ENCODE measurements at regions of chr6 and their contacts with region 1.

Region 1: DNA sequence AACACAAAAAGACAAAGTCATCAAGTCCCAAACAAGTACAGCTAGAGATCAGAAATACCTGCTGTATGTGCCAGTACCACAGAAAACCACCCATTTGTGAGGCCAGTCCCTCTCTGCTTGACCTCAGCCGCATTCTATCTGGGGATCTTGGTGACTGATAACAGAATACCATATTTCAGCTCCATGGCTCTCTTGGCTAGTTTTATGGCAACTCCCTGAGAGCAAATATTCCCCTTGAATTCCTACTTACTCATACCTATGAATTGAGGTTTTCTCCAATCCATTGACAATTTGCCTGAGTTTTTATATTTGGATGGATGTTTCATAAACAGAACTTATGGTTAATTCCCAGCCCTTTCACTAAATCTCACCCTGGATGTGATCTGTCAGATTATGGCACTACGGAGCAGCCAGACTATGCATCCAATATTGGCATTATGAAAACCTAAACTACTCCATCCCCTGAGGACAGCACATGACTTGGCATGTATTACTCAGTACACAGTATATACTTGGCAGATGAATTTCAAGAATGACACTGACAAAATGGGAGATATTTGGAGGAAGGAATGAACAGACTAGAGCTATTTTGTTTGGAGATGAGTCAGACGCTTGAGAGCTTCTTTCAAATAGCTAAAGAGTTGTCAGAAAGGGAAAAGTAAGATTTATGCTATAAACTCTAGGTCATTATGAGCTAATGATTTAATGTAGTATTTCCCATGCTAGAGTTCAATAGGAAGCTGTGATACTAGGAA is 95.7 kb downstream of the PRDM1 start:
- DNase-seq: no peak
- CTCF ChIP-seq: no peak

Region 2: DNA sequence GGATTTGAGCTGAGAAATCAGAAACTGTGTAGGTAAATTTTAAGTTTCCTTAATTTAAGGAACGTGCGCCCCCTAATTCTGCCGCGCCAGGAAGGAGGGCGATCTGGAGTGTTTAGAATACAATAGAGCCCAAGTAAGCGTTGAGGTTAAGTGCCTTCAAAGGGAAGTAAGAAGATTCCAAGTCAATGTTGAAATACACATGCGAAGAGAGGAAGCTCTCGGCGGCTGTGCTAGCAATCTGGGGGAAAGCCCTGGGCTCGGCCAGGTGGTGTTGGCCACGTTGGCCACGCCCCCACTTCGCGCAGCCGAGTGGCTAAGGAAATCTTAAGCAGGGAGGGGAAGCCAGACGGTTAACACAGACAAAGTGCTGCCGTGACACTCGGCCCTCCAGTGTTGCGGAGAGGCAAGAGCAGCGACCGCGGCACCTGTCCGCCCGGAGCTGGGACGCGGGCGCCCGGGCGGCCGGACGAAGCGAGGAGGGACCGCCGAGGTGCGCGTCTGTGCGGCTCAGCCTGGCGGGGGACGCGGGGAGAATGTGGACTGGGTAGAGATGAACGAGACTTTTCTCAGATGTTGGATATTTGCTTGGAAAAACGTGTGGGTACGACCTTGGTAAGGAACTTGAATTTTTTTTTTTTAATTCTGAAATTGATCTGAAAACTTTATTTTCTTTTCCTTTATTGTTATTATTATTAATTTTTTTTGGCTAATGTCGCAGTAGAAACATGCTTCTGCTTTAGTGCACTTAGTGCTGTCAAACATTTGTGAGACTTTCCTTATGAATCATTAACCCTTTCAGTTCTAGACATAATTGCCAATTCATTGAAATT is 95.6 kb before region 1 on chr6 and contains the start of gene PRDM1:
- CTCF ChIA-PET with region 1: no interaction called
- POLR2A ChIA-PET with region 1: no interaction called
- DNase-seq: peak; percentile 82
- CTCF ChIP-seq: peak; percentile 26

Region 3: GRCh38 chr6:106163446-106163965 is 18.3 kb before region 1 on chr6:
- CTCF ChIA-PET with region 1: interaction called, 30 read pairs
- POLR2A ChIA-PET with region 1: interaction called, 11 read pairs
- DNase-seq: peak; percentile 40
- CTCF ChIP-seq: peak; percentile 3

Region 4: GRCh38 chr6:106194949-106195921 is 13.4 kb after region 1 on chr6:
- CTCF ChIA-PET with region 1: interaction called, 12 read pairs
- POLR2A ChIA-PET with region 1: no interaction called
- DNase-seq: no peak
- CTCF ChIP-seq: no peak

Region 5: DNA sequence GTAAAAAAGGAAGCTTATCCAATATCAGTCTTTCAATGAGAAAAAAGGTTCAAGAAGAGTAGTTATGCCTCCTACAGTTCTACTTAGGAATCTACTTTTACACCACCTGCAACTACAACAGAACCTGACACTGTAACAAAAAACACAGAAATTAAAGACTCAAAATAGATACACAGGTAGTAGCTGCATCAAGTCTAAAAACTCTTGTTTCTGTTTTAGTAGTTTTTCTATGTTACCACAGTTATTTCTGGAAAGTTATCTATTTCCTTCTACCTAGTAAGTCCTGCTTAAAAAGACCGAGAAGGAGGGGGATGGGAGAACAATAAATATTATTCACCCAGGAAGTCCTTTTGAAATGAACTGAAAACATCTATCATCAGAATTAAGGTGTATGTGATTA is 91.2 kb after region 1 on chr6:
- CTCF ChIA-PET with region 1: no interaction called
- POLR2A ChIA-PET with region 1: no interaction called
- DNase-seq: no peak
- CTCF ChIP-seq: peak; percentile 4

Measured in GM10248 (cell line).